ENCODE measurements at regions of chr2 and their contacts with region 1.

Region 1: GRCh38 chr2:17672583-17673317 is 80.9 kb downstream of the SMC6 start:
- DNase-seq: no peak
- ATAC-seq: peak; percentile 65
- H3K4me3 Mint-ChIP-seq: no peak overlapping the region
- H3K27ac Mint-ChIP-seq: peak overlapping the region; percentile 12
- H3K4me1 Mint-ChIP-seq: peaks cover 13% of the 10 kb centered on the region
- H3K27me3 Mint-ChIP-seq: no peaks in the 10 kb centered on the region

Region 2: GRCh38 chr2:17646081-17646554 is 26.6 kb before region 1 on chr2:
- CTCF ChIA-PET with region 1: interaction called, 74 read pairs
- DNase-seq: peak; percentile 57
- ATAC-seq: peak; percentile 73
- H3K4me3 Mint-ChIP-seq: no peak overlapping the region
- H3K27ac Mint-ChIP-seq: no peak overlapping the region
- H3K4me1 Mint-ChIP-seq: peaks cover 11% of the 10 kb centered on the region
- H3K27me3 Mint-ChIP-seq: no peaks in the 10 kb centered on the region

Region 3: GRCh38 chr2:17658251-17658843 is 14.4 kb before region 1 on chr2:
- CTCF ChIA-PET with region 1: interaction called, 35 read pairs
- DNase-seq: no peak
- ATAC-seq: peak; percentile 53
- H3K4me3 Mint-ChIP-seq: no peak overlapping the region
- H3K27ac Mint-ChIP-seq: peak overlapping the region; percentile 33
- H3K4me1 Mint-ChIP-seq: peaks cover 16% of the 10 kb centered on the region
- H3K27me3 Mint-ChIP-seq: no peaks in the 10 kb centered on the region

Region 4: GRCh38 chr2:17689010-17689409 is 16.3 kb after region 1 on chr2:
- CTCF ChIA-PET with region 1: interaction called, 11 read pairs
- DNase-seq: no peak
- ATAC-seq: no peak
- H3K4me3 Mint-ChIP-seq: no peak overlapping the region
- H3K27ac Mint-ChIP-seq: no peak overlapping the region
- H3K4me1 Mint-ChIP-seq: no peaks in the 10 kb centered on the region
- H3K27me3 Mint-ChIP-seq: no peaks in the 10 kb centered on the region